ENCODE measurements at regions of chr12 and their contacts with region 1.

Region 1: DNA sequence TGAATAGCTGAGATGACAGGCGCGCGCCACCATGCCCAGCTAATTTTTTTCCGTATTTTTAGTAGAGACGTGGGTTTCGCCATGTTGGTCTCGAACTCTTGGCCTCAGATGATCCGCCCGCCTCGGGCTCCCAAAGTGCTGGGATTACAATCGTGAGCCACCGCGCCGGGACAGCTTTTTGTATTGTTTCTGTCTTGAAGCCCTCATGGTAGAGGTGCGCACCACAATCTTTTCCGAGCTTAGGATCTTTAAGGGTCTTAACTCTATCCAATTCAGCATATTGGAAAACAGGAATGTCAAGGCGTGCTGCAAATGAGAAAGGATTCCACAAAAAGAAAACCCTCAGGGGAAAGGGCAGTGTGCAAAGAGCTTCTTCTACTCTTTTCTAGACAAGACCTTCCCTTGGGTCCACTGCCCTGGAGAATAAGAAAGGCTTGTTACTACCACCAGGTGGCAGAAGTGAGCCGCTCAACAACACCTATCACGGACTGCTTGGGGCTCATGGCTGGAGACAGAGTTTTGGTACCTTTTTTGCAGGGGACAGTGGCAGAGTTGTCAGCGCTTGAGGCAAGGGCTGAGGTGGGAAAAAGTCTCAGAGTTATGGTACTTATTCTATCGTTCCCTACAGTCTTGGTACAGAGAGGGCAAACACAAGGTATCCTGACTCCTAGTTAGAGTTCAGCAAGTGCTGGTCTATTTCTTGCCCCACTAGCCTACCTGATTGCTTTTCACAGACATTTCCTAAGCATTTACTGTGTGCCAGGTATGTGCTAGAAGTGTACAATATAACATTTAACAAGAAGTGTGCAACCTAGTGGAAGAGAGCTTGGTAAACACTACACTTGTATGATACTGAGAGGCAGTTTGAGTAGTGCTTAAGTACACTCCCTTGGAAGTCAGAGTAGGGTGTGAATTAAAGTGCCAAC is 16.4 kb upstream of the SP7 start:
- DNase-seq: peak; percentile 45 to 95 (median 86)

Region 2: GRCh38 chr12:53274445-53274844 is 78.1 kb before region 1 on chr12:
- intact Hi-C with region 1: no loop called
- DNase-seq: no peak

Region 3: DNA sequence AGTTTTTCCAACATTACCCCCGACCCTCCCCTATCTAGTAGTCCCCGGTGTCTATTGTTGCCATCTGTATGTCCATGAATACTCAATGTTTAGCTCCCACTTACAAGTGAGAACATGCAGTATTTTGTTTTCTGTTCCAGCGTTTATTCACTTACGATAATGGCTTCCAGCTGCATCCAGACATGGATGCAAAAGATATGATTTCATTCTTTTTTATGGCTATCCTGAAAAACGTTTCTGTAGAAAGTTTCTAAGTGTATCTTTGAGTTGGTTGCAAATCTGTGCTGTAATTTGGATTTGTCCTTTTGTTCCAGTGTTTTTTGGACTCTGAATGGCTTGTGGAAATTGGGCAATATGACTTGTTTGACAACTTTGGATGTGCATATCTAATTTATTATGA is 39.1 kb after region 1 on chr12:
- intact Hi-C with region 1: no loop called
- DNase-seq: no peak

Region 4: DNA sequence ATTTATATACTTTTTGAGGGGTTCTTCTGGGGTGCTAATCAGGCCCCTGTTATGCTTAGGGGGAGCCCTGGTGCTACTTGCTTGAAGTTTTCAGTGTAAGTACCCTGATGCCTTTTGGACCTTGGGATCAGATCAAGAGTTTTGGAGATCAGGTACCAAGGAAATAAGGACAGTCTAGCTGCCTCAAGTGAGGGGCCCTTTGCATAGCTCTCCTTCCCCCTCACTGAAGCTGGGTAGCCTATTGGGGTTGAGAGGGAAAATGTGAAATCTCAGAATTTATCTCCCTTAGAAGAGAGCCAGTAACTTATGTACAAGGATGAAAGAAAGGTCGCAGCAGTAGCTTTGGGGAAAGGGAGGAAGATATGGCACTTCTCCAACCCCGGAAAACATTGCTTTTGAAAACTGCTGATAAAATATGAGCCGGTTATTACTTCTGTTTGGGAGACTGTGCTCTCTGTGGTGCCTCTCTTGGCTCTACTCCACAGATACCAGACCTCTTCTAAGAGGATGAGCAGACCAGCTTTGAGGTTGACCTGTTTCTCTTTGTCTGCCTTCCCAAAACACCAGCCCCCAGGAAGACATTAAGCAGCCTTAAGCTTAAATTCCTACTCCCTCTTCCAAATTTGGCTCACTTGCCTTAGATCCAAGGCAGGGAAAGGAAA is 62.3 kb after region 1 on chr12:
- intact Hi-C with region 1: loop called (anchors 5 kb)
- DNase-seq: no peak

Region 5: GRCh38 chr12:53500776-53501614 is 148.4 kb after region 1 on chr12 and contains the start of gene TARBP2:
- intact Hi-C with region 1: loop called (anchors 10 kb)
- DNase-seq: peak; percentile 95 to 100 (median 99)